ENCODE measurements at regions of chr16 and their contacts with region 1.

Region 1: GRCh38 chr16:67883872-67884261 is 818 bp upstream of the NRN1L start:
- DNase-seq: peak in 1 of 2 donors; percentile 77
- H3K4me3 ChIP-seq: no peak overlapping the region
- H3K27ac ChIP-seq: peak overlapping the region; percentile 30
- H3K4me1 ChIP-seq: peaks cover 12% of the 10 kb centered on the region
- H3K27me3 ChIP-seq: no peaks in the 10 kb centered on the region
- CTCF ChIP-seq: peak; percentile 46 to 84 (median 69)
- POLR2A ChIP-seq: no peak

Region 2: DNA sequence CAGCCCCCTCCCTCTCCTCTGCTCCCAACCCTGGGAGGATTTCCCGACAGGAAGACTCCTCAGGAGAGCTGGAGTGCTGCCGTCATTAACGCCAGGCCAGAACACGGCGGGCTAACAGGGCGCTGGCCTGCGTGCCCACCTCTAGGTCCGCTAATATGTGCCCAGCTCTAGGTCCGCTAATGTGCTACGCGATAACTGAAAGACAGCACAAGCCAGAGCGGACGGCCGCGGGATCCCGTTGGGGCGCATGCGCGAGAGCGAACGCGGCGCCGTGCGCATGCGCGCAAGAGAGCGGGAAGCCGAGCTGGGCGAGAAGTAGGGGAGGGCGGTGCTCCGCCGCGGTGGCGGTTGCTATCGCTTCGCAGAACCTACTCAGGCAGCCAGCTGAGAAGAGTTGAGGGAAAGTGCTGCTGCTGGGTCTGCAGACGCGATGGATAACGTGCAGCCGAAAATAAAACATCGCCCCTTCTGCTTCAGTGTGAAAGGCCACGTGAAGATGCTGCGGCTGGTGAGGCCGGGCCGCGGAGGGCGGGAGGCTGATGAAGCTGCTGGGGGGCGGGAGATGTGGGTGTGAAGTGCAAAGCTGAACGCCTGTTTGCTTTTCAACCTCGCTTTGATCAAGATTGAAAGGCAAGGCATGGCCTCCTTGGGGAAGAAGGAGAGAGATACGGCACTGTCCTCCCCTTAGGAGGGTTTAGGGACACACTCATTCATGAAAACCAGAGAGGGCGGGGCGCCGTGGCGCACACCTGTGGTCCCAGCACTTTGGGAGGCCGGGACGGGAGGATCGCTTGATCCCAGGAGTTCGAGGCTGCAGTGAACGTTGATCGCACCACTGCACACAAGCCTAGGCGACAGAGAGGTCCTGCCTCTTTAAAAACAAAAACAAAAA is 1331.3 kb before region 1 on chr16 and contains the start of gene CKLF:
- intact Hi-C with region 1: no loop called
- DNase-seq: peak in 1 of 2 donors; percentile 91
- H3K4me3 ChIP-seq: peak within 1 kb of the TSS; percentile 58 to 64
- H3K27ac ChIP-seq: peak within 1 kb of the TSS; percentile 89
- H3K4me1 ChIP-seq: peaks cover 60% of the 10 kb centered on the region
- H3K27me3 ChIP-seq: no peaks in the 10 kb centered on the region
- CTCF ChIP-seq: no peak
- POLR2A ChIP-seq: peak in 1 of 2 donors; percentile 71
- total RNA-seq, gene CKLF: 52.3 TPM

Region 3: GRCh38 chr16:66810391-66810790 is 1073.5 kb before region 1 on chr16:
- intact Hi-C with region 1: no loop called
- DNase-seq: no peak
- H3K4me3 ChIP-seq: no peak overlapping the region
- H3K27ac ChIP-seq: no peak overlapping the region
- H3K4me1 ChIP-seq: no peaks in the 10 kb centered on the region
- H3K27me3 ChIP-seq: no peaks in the 10 kb centered on the region
- CTCF ChIP-seq: no peak
- POLR2A ChIP-seq: no peak

Region 4: GRCh38 chr16:67928561-67929364 is 44.9 kb after region 1 on chr16:
- intact Hi-C with region 1: loop called (anchors 5 kb)
- DNase-seq: no peak
- H3K4me3 ChIP-seq: no peak overlapping the region
- H3K27ac ChIP-seq: no peak overlapping the region
- H3K4me1 ChIP-seq: peaks cover 22% of the 10 kb centered on the region
- H3K27me3 ChIP-seq: no peaks in the 10 kb centered on the region
- CTCF ChIP-seq: peak; percentile 50 to 72 (median 69)
- POLR2A ChIP-seq: no peak

Measured in vagina (tissue), 2 donors.